Endothelial cell of umbilical vein (primary cell): ENCODE measurements at regions of chr7 and their contacts with region 1.

Region 1: DNA sequence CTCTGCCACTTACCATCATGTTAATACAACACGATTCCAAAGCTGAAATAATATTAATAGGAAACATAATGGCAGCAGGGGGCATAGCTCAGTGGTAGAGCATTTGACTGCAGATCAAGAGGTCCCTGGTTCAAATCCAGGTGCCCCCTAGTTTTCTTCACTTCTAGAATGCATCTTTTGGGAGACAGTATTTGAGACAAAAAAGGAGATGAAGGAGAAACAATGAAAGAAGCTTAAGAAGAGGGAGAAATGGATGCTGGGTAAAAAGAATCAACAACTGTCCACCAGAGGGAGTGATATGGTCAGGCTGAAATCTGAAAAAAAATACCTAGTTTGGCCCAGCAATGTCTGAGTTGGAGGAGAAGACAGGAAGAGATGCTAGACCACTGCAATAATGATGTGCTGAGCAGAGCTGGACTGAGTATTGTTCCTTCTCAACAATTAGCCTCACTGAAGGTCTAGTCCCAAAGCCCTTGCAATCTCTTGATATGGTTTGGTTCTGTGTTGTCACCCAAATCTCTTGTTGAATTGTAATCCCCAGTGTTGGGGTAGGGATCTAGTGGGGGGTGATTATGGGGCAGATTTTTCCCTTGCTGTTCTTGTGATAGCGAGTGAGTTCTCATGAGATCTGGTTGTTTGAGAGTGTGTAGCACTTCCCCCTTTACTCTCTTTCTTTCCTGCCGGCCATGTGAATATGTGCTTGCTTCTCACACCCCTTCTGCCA is 48.3 kb downstream of the ZNF783 start:
- DNase-seq: peak; percentile 69
- H3K4me3 ChIP-seq: no peak overlapping the region
- H3K27ac ChIP-seq: no peak overlapping the region
- H3K4me1 ChIP-seq: no peaks in the 10 kb centered on the region
- H3K27me3 ChIP-seq: peaks cover 2 to 5% of the 10 kb centered on the region in 2 experiments
- CTCF ChIP-seq: peak; percentile 50 to 61
- POLR2A ChIP-seq: no peak

Region 2: DNA sequence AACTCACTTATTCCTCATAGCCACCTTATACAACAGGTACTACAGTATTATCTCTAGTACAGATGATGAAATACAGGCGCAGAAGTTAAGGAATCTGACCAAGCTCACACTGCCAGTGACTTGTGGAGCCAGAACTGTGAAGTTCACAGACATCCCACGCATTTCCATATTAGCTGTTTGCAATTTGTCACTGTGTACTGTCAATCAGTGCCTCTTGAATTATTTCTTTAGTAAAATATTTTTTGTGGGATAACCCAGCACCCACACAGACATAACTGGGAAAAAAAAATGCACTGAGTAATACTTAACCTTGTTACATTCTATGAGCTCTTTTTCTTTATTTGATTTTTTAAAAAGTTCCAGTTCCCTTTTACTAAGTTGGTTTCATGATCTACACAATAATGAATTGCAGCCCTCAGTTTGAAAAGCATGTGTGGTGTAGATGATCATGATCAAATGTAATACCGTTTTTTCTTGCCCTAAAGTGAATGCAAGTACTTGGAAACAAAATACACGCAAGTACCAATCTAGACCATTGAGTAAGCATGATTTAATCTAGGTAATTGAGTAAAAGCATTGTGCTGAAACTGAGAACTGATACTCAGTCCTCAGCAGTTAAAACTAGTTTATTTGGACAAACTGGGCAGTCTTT is 597.5 kb before region 1 on chr7:
- CTCF ChIA-PET with region 1: no interaction called
- POLR2A ChIA-PET with region 1: no interaction called
- dilution Hi-C with region 1: no loop called
- intact Hi-C with region 1: no loop called
- DNase-seq: no peak
- H3K4me3 ChIP-seq: no peak overlapping the region
- H3K27ac ChIP-seq: no peak overlapping the region
- H3K4me1 ChIP-seq: no peaks in the 10 kb centered on the region
- H3K27me3 ChIP-seq: no peaks in the 10 kb centered on the region
- CTCF ChIP-seq: no peak
- POLR2A ChIP-seq: no peak

Region 3: GRCh38 chr7:149284850-149285626 is 25.2 kb before region 1 on chr7:
- CTCF ChIA-PET with region 1: interaction called, 11 read pairs
- POLR2A ChIA-PET with region 1: no interaction called
- dilution Hi-C with region 1: no loop called
- intact Hi-C with region 1: no loop called
- DNase-seq: peak; percentile 95
- H3K4me3 ChIP-seq: peak overlapping the region; percentile 43 to 76 (median 73)
- H3K27ac ChIP-seq: no peak overlapping the region
- H3K4me1 ChIP-seq: peaks cover 9% of the 10 kb centered on the region
- H3K27me3 ChIP-seq: no peaks in the 10 kb centered on the region
- CTCF ChIP-seq: no peak
- POLR2A ChIP-seq: peak; percentile 80

Region 4: DNA sequence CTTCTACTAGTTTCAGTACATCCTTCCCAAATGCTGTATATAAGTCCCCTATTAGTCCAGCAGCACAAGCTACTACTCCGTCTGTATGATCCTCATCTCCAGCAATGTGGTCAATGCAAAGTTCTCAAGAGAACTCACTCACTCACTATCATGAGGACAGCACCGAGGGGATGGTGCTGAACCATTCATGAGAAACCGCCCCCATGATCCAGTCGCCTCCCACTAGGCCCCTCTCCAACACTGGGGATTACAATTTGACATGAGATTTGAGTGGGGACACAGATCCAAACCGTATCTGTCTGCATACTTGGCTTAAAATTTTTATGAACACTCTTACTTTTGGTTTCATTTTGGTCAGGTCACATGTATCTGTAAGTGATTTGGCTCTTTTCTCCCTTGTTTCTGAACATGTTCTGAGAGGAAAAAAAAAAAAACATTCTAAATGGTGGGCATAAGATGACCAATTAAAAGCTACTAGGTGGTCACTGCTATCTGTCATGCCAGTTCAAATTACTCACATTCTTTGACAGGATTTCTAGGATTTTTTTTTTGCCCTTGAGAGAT is 11.8 kb after region 1 on chr7:
- CTCF ChIA-PET with region 1: interaction called, 15 read pairs
- POLR2A ChIA-PET with region 1: no interaction called
- dilution Hi-C with region 1: no loop called
- intact Hi-C with region 1: no loop called
- DNase-seq: peak; percentile 32
- H3K4me3 ChIP-seq: peak overlapping the region in 1 of 3 experiments; percentile 15
- H3K27ac ChIP-seq: no peak overlapping the region
- H3K4me1 ChIP-seq: no peaks in the 10 kb centered on the region
- H3K27me3 ChIP-seq: peaks cover 3 to 6% of the 10 kb centered on the region in 2 experiments
- CTCF ChIP-seq: no peak
- POLR2A ChIP-seq: no peak

Region 5: DNA sequence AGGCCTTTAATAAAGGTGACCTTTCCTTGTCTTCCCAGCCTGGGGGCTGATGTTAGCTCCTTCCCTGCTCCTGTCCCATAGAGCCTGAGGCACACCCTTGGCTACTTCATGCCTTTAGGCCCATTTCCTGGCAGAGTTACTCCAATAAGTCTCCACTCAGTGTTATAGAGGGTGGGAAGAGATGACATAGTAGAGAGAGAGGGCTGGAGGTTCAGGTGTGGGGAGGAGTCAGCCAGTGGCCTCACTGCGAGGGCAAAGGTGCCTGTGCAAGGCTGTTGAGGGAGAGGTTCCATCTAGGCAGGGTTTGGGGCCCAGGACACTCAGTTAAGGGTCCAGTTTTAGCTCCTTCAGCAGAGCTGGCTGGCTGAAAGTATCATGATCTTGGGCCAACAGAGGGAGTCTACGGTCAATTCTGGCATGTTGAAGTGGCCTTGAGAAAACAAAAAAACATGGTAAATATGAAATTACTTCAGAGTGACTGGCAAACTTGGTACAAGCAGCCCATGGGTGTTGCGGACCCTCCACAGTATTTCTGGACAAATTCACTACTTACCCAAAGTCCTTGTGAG is 19.6 kb after region 1 on chr7:
- CTCF ChIA-PET with region 1: interaction called, 10 read pairs
- POLR2A ChIA-PET with region 1: no interaction called
- dilution Hi-C with region 1: no loop called
- intact Hi-C with region 1: no loop called
- DNase-seq: no peak
- H3K4me3 ChIP-seq: no peak overlapping the region
- H3K27ac ChIP-seq: no peak overlapping the region
- H3K4me1 ChIP-seq: no peaks in the 10 kb centered on the region
- H3K27me3 ChIP-seq: peaks cover 0 to 2% of the 10 kb centered on the region in 2 experiments
- CTCF ChIP-seq: no peak
- POLR2A ChIP-seq: no peak

Region 6: GRCh38 chr7:149422129-149422913 is 112.0 kb after region 1 on chr7:
- CTCF ChIA-PET with region 1: interaction called, 14 read pairs
- POLR2A ChIA-PET with region 1: no interaction called
- dilution Hi-C with region 1: no loop called
- intact Hi-C with region 1: loop called (anchors 1 kb)
- DNase-seq: peak; percentile 69
- H3K4me3 ChIP-seq: peak overlapping the region; percentile 26 to 42 (median 41)
- H3K27ac ChIP-seq: no peak overlapping the region
- H3K4me1 ChIP-seq: peaks cover 10% of the 10 kb centered on the region
- H3K27me3 ChIP-seq: no peaks in the 10 kb centered on the region
- CTCF ChIP-seq: peak; percentile 68 to 72
- POLR2A ChIP-seq: no peak

Region 7: GRCh38 chr7:149460493-149461277 is 150.4 kb after region 1 on chr7 and contains the start of gene ZNF777:
- CTCF ChIA-PET with region 1: interaction called, 7 read pairs
- POLR2A ChIA-PET with region 1: no interaction called
- dilution Hi-C with region 1: no loop called
- intact Hi-C with region 1: loop called (anchors 1 kb)
- DNase-seq: peak; percentile 80
- H3K4me3 ChIP-seq: peak within 1 kb of the TSS; percentile 26 to 82 (median 60)
- H3K27ac ChIP-seq: peak within 1 kb of the TSS; percentile 8
- H3K4me1 ChIP-seq: peaks cover 9% of the 10 kb centered on the region
- H3K27me3 ChIP-seq: no peaks in the 10 kb centered on the region
- CTCF ChIP-seq: peak; percentile 40 to 50
- POLR2A ChIP-seq: peak; percentile 77
- total RNA-seq, gene ZNF777: 11.1 and 12.2 TPM in 2 replicates